Sciatic nerve (tissue), 2 donors: ENCODE measurements at regions of chr3 and their contacts with region 1.

Region 1: DNA sequence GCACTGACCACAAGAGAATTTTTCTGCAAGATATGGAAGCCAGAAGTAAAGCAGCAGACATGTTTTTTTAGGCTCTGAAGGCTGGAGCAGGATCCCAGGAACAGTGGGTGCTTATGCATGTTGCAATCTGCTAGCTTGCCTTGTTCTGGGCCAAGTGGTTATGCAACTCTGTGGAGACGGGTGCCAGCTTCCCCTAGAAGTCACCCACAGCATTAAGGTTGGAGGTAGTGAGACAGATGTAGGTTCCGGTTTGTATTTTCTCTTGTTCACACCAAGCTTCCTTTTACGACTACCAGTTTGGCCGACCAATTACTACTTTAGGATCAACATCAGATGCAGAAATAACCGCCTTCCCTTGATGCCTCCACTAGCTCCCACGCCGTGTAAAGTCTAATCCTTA is 11.1 kb downstream of the DPH3 start:
- DNase-seq: no peak
- ATAC-seq: peak; percentile 94

Region 2: GRCh38 chr3:14761118-14761672 is 1492.4 kb before region 1 on chr3:
- intact Hi-C with region 1: no loop called
- DNase-seq: no peak
- ATAC-seq: no peak

Region 3: DNA sequence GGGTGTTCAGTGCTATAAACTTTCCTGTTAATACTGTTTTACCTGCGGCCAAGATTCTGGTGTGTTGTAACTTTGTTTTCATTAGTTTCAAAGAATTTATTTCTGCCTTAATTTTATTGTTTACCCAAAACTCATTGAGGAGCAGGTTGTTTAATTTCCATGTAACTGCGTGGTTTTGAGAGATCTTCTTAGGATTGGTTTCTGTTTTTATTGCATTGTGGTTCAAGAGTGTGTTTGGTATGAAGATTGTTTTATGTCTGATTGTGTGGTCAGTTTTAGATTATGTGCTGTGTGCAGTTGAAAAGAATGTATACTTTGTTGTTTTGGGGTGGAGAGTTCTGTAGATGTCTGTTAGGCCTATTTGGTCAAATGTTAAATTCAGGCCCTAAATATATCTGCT is 212.6 kb before region 1 on chr3:
- intact Hi-C with region 1: loop called (anchors 5 kb)
- DNase-seq: no peak
- ATAC-seq: no peak

Region 4: DNA sequence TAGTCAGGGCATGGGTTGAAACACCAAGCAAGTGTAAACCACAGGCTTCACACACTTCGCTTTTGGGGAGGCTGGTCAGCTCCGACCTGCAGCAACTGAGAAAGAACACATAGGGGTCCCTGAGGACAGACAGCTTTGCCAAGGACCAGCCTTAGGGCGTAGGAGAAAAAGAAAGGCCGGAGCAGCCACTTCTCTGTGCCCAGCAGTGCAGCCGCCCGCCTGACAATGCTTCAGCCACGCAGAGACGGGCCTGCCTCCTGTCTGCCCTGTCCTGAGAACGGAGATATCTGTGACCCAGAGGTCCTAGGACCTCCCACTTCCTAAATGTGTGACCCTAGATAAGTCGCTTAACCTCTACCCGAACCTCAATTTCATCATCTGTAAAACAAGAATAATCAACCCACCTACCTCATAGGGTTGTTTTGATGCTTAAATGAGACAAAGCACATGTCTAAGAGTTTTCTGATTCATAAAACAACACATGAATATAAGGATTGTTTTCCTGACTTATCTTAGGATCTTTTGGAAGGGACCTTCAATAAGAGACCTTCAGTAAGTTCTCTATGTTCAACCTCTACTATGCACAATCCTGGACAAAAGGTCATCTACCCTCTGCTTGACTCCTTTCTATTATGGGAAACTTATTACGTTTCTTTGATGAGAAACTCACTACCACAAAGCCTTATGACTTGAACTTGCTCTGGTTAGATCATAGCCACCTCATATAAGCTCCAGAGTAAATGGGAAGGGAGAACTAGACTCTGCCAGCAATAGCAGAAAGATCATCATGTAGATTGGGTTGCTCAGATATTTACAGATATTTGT is 292.8 kb after region 1 on chr3:
- intact Hi-C with region 1: no loop called
- DNase-seq: no peak
- ATAC-seq: peak; percentile 9